Heart left ventricle (tissue), 16 donors: ENCODE measurements at regions of chr11 and their contacts with region 1.

Region 1: GRCh38 chr11:119381181-119381988 is at the start of gene USP2:
- DNase-seq: peak; percentile 95 to 98 (median 97)
- ATAC-seq: peak; percentile 91 to 94 (median 92)
- H3K4me3 ChIP-seq: peak within 1 kb of the TSS; percentile 9 to 65 (median 50)
- H3K27ac ChIP-seq: peak within 1 kb of the TSS in 11 of 12 donors; percentile 37 to 88 (median 69)
- H3K4me1 ChIP-seq: peaks cover 0 to 40% (median 20%) of the 10 kb centered on the region in 12 donors
- H3K27me3 ChIP-seq: peaks cover 0 to 7% (median 0%) of the 10 kb centered on the region in 9 donors
- CTCF ChIP-seq: peak; percentile 77 to 99 (median 92)
- POLR2A ChIP-seq: peak in 1 of 2 donors; percentile 64
- total RNA-seq, gene USP2: 53.7 to 138 (median 108) TPM

Region 2: GRCh38 chr11:119262668-119263351 is 118.6 kb before region 1 on chr11:
- intact Hi-C with region 1: no loop called
- DNase-seq: no peak
- ATAC-seq: peak; percentile 51 to 82 (median 68)
- H3K4me3 ChIP-seq: peak overlapping the region in 1 of 12 donors; percentile 13
- H3K27ac ChIP-seq: peak overlapping the region in 11 of 12 donors; percentile 34 to 80 (median 59)
- H3K4me1 ChIP-seq: peaks cover 4 to 90% (median 23%) of the 10 kb centered on the region in 12 donors
- H3K27me3 ChIP-seq: no peaks in the 10 kb centered on the region
- CTCF ChIP-seq: peak in 4 of 12 donors; percentile 18 to 41 (median 26)
- POLR2A ChIP-seq: no peak

Region 3: DNA sequence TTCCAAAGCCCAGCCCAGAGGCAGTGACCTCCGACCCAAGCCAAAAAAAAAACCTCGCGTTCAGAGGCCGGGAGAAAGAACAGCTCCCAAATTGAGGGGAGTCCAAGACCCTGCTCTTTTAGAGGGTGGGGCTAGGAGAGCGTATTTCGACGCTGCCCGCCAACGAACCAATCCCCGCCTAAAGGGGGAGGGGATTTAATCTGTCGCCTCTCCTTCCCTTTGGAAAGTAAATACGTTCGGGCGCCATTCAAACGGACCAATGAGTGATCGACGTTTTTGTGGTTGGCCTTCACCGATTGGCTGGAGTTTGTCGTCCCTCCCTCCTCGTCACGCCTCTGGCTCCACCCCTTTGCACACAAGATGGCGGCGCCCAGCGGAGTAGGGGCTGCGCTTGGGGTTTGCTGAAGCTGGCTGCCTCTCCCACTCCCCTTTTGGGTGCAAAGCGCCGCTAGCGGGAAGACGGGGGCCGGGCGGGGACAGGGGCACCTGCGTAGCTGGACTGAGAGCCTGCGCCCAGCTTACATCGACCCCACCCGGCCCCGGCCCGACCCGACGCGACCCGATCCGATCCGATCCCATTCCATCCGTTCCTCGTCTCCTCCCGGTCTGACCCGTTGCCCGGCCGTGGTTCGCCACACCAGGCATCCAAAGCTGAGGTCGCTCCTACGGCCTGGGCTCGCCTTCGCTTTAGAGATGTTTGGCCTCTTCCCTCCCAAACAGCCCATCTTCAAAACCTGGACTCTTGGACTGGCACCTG is 47.0 kb before region 1 on chr11 and contains the start of gene RNF26:
- intact Hi-C with region 1: loop called in 2 of 10 experiments (anchors 1 to 5 kb)
- DNase-seq: peak; percentile 94 to 96 (median 96)
- ATAC-seq: peak; percentile 92 to 96 (median 93)
- H3K4me3 ChIP-seq: peak within 1 kb of the TSS; percentile 76 to 99 (median 86)
- H3K27ac ChIP-seq: peak within 1 kb of the TSS; percentile 50 to 91 (median 82)
- H3K4me1 ChIP-seq: peaks cover 5 to 47% (median 32%) of the 10 kb centered on the region in 12 donors
- H3K27me3 ChIP-seq: peaks cover 0 to 3% (median 0%) of the 10 kb centered on the region in 9 donors
- CTCF ChIP-seq: no peak
- POLR2A ChIP-seq: peak; percentile 11 to 48
- total RNA-seq, gene RNF26: 8.1 to 22.4 (median 11.8) TPM

Region 4: DNA sequence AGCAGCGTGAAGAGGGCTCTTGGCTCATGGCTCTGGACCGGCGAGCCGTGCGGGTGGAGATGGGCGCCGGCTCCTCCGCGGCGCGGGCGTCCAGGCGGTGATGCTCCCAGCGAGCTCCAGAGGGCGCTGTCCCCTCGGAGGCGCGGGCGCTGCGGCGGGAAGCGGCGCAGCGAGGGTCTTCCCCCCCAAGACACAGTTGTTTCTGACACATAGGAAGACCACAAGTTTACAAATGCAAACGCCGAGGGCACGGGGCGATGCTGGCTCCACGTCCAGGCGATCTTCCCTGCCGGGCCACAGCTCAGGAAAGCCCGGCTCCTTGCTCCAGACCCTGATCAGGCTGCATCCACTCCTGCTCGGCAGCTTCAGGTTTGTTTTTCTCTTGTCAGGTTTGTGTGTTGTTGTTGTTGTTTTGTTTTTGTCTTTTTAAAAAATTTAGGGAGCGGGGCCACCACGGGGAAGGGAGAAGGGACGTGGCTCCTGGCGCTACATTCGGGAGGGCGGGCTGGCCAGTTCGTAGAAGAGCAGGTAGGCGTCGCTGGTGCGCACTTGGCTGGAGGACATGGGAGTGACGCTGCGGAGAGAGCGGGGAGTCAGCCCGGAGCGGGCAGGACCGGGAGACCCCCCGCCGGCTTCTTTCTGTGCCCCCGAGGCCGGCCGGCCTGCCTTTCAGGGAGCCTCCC is 24.9 kb before region 1 on chr11:
- intact Hi-C with region 1: loop called in 1 of 10 experiments (anchors 2 kb)
- DNase-seq: peak; percentile 84 to 91 (median 85)
- ATAC-seq: peak; percentile 35 to 71 (median 68)
- H3K4me3 ChIP-seq: peak overlapping the region in 11 of 12 donors; percentile 40 to 73 (median 60)
- H3K27ac ChIP-seq: peak overlapping the region; percentile 22 to 99 (median 74)
- H3K4me1 ChIP-seq: peaks cover 3 to 73% (median 39%) of the 10 kb centered on the region in 12 donors
- H3K27me3 ChIP-seq: peaks cover 0 to 11% (median 0%) of the 10 kb centered on the region in 9 donors
- CTCF ChIP-seq: peak; percentile 76 to 95 (median 90)
- POLR2A ChIP-seq: peak in 1 of 2 donors; percentile 25